ENCODE measurements at regions of chr12 and their contacts with region 1.

Region 1: DNA sequence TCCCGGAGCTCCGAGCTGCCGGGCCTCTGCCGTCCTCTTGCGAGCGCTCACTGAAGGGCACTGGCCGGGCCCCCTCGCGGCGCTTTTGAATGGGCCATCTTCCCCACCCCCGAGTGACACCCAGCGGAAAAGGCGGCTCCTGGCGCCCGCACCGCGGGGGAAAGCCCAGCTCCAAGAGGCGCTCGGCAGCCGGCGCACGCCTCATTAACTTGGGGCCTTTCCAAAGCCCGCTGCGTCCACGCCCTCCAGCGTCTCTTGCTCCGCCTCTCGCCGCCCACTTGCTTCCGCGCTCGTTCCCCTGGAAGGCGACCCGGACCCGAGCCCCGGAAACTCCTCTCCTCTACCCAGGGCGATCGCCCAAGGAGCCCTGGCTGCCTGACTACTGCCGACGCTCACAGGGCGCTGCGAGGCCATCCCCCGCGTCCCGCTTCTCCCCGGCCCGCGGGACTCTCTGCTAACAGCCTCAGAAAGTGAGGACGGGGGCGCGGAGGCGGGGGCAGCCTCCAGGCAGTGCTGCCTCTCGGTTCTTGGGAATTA is at the start of gene PHLDA1:
- DNase-seq: peak; percentile 97
- H3K4me3 Mint-ChIP-seq: peak within 1 kb of the TSS; percentile 96
- H3K27ac Mint-ChIP-seq: peak within 1 kb of the TSS; percentile 94
- H3K4me1 Mint-ChIP-seq: peaks cover 34% of the 10 kb centered on the region
- H3K27me3 Mint-ChIP-seq: no peaks in the 10 kb centered on the region
- total RNA-seq, gene PHLDA1: 23.8 to 24.4 TPM

Region 2: GRCh38 chr12:74537707-74538385 is 1493.8 kb before region 1 on chr12 and contains the start of gene ATXN7L3B:
- CTCF ChIA-PET with region 1: no interaction called
- POLR2A ChIA-PET with region 1: no interaction called
- intact Hi-C with region 1: loop called (anchors 5 kb)
- DNase-seq: peak; percentile 97
- H3K4me3 Mint-ChIP-seq: peak within 1 kb of the TSS; percentile 92
- H3K27ac Mint-ChIP-seq: peak within 1 kb of the TSS; percentile 94
- H3K4me1 Mint-ChIP-seq: peaks cover 48% of the 10 kb centered on the region
- H3K27me3 Mint-ChIP-seq: no peaks in the 10 kb centered on the region
- total RNA-seq, gene ATXN7L3B: 16.7 to 17.0 TPM

Region 3: DNA sequence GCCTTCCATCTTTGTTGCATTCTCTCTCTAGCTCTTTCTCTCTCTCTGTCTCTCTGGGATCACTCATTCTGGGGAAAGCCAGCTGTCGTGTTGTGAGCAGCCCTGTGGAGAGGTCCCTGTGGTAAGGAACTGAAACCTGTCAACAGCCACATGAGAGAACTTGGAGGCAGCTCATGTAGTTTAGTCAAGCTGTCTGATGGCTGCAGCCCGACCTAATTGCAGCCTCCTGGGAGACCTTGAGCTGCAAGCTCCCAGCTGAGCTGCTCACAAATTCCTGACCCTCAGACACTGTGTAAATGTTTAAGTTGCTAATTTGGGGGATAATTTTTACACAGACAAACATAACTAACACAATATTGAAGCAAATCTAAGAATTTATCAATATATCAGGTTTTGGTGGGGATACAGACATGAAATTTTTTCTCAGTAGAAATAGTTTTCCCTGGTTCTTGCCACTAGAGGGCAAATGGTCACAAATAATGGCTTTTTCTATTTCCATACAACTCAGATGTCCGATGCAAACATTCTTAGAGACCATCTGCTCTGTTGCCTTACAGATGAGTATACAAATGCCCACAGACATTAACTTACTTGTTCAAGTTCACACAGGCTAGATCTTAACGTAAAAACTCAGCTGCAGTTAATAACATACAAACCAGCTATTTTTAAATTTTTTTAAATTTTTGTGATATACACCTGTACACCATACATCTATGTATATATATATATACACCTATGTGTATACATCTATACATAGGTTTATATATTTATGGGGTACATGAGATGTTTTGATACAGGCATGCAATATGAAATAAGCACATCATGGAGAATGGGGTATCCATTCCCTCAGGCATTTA is 504.7 kb before region 1 on chr12:
- CTCF ChIA-PET with region 1: interaction called, 67 read pairs
- POLR2A ChIA-PET with region 1: interaction called, 4 read pairs
- intact Hi-C with region 1: loop called (anchors 1 kb)
- DNase-seq: peak; percentile 21
- H3K4me3 Mint-ChIP-seq: no peak overlapping the region
- H3K27ac Mint-ChIP-seq: no peak overlapping the region
- H3K4me1 Mint-ChIP-seq: peaks cover 6% of the 10 kb centered on the region
- H3K27me3 Mint-ChIP-seq: peaks cover 19% of the 10 kb centered on the region

Region 4: DNA sequence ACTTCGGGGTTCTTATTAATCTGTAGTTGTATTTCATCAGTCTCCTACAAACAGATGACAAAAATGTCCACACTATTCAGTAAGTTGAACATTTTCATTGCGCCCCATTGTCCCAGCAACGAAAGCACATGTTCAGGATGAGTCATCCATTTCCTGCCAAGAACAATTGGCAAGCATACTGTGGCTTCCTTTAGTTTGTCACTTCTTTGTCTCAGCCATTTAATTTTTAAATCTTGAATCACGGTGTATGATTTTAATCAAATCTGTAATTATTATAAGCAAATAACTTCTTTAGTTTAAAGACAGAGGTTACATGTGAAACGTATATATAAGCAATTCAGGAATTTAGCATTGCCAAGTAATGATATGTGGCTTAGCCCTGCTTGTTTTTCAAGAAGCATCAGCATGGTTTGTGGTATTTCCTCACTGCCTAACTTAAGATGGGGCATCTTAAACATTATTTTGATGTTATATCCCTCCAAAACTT is 308.8 kb before region 1 on chr12:
- CTCF ChIA-PET with region 1: interaction called, 4 read pairs
- POLR2A ChIA-PET with region 1: no interaction called
- intact Hi-C with region 1: loop called (anchors 5 kb)
- DNase-seq: peak; percentile 56
- H3K4me3 Mint-ChIP-seq: no peak overlapping the region
- H3K27ac Mint-ChIP-seq: peak overlapping the region; percentile 28
- H3K4me1 Mint-ChIP-seq: peaks cover 15% of the 10 kb centered on the region
- H3K27me3 Mint-ChIP-seq: no peaks in the 10 kb centered on the region

Region 5: DNA sequence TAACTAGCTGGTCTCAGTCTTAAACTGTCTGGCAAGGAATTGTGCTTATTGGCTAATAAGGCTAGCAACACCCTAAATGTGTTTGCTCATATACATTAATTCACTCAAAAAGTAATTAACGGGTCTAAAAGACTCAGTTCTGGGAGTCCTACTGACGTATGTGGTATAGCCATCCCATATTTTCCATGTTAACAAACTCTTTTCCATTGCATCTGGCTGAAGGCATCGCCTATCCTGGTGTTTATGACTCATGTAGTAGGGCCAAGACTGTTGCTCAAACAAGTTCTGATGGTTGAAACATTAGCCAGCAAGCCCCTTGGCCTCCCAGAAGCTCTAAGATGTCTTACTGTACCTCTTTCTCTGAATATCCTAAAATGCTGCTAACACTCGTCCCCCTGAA is 98.5 kb before region 1 on chr12:
- CTCF ChIA-PET with region 1: interaction called, 12 read pairs
- POLR2A ChIA-PET with region 1: interaction called, 25 read pairs
- intact Hi-C with region 1: loop called (anchors 1 kb)
- DNase-seq: no peak
- H3K4me3 Mint-ChIP-seq: no peak overlapping the region
- H3K27ac Mint-ChIP-seq: no peak overlapping the region
- H3K4me1 Mint-ChIP-seq: peaks cover 20% of the 10 kb centered on the region
- H3K27me3 Mint-ChIP-seq: no peaks in the 10 kb centered on the region

Region 6: DNA sequence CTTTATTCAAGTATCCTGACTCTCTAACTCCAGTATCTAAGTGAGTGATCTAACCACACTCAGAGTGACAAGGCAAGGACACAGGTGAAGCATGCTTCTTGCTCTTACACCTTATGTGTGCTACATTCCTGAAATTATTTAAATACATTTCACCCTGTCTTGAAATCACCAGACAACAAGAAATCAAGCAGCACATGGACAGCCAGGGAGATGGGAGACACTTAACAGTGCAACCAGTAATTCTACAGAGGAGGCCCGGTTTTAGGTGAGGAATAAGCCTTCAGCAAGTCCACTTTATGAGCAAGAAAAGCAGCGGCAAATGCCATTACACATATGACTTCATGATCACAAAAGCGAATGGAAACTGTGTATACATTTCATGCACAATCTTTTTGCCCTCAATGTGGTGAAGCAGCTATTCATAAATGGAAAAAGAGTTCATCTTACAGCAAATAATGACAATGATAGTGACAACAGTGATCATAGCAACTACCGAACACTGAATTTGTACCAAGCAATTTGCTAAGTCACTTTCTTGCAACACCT is 37.3 kb before region 1 on chr12:
- CTCF ChIA-PET with region 1: interaction called, 3 read pairs
- POLR2A ChIA-PET with region 1: interaction called, 4 read pairs
- intact Hi-C with region 1: loop called (anchors 1 kb)
- DNase-seq: peak; percentile 45
- H3K4me3 Mint-ChIP-seq: no peak overlapping the region
- H3K27ac Mint-ChIP-seq: peak overlapping the region; percentile 70
- H3K4me1 Mint-ChIP-seq: peaks cover 29% of the 10 kb centered on the region
- H3K27me3 Mint-ChIP-seq: no peaks in the 10 kb centered on the region

Region 7: GRCh38 chr12:76158518-76159321 is 127.1 kb after region 1 on chr12:
- CTCF ChIA-PET with region 1: no interaction called
- POLR2A ChIA-PET with region 1: no interaction called
- intact Hi-C with region 1: loop called (anchors 5 kb)
- DNase-seq: peak; percentile 91
- H3K4me3 Mint-ChIP-seq: peak overlapping the region; percentile 16
- H3K27ac Mint-ChIP-seq: peak overlapping the region; percentile 25
- H3K4me1 Mint-ChIP-seq: peaks cover 16% of the 10 kb centered on the region
- H3K27me3 Mint-ChIP-seq: peaks cover 12% of the 10 kb centered on the region